ENCODE measurements at regions of chr5 and their contacts with region 1.

Region 1: DNA sequence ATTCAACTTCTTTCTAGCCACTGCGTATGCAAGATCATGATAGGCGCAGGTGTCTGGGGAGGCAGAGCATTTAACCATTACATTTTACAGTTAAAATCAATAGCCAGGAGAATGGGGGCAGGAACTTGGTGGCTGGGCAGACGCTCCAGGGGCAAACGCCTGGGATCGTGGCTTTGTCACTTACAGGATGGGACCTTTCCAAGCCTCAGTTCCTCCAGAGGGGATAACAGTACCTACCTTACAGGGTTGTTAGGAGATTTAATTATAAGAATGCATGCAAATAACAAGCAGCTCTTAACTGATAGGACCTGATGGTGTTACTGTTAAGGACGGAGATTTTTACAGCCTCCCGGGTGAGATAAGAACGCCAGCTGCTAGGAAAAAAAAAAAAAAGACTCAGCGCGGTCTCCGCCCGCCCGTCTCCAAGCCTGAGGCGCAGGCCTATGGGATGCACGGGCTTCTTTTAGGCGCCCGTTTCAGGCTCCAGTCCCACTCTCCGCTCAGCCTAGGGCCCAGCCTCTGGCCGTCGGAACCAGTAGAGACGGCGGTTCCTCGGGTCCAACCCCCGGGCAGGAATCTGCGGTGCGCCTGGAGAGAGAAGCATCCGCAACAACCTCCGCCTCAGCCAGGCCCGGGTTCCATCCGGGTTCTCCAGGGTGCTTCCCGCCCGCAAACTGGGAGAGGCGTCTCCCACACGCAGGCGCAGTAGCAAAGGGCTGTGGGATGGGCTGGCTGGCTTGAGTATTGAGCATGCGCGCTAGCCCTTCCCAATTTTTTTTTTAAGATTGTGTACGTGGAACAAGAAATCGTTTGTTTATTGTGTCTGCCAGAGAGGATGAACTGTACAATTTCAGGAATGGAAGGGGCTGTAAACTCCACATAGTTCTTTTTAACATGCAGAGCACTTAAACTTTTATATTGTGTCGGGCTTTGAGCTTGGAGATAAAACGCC is at the start of gene FAM200C:
- DNase-seq: peak; percentile 94 to 95
- H3K4me3 ChIP-seq: peak within 1 kb of the TSS; percentile 56
- H3K4me3 Mint-ChIP-seq: peak within 1 kb of the TSS; percentile 96
- H3K27ac Mint-ChIP-seq: peak within 1 kb of the TSS; percentile 96
- H3K4me1 ChIP-seq: no peaks in the 10 kb centered on the region; the same call in 1 of the 2 replicates
- H3K4me1 Mint-ChIP-seq: peaks cover 6% of the 10 kb centered on the region
- H3K27me3 ChIP-seq: no peaks in the 10 kb centered on the region
- H3K27me3 Mint-ChIP-seq: no peaks in the 10 kb centered on the region
- CTCF ChIP-seq: no peak
- total RNA-seq, gene FAM200C: 3.2 TPM in 2 replicates

Region 2: DNA sequence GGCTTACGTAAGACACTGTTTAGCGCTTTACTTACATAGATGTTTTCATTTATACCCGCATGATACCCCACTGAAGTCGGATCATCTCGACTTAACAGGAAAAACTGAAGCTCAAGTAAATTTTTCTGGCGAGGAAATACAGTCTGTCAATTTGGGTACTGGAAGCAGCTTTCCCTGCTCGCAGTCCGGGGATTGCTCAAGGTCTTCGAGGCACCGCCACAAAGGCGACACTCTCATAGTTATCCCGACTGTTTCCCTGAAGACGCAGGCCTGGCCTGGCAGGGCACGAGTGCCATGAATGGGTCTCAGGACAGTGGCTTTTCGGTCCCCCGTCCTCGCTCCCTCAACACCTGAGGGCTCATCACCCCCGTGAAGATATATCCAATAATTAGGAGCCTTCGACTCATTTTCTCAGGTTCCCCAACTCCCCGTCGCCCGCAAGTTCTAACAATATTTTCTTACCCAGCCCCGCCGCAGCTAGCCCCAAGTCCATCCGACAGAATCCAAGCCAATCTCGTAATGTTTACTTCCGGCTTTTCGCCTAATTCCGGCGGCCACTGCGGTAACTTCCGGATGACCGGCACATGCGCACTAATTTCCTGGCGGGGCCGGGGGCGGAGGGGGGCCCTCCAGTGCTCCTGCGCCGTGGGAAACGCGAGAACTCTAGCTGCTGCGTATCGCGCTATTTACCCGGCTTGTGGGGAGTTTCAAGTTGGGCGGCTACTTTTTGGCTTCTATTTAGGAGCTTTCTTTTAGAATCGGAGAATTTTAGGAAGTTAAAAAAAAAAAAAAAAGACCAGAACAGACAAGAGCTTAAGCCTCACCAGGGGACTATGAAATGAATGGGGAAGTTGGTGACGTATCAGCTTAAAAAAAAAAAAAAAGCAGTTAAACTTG is 19.1 kb after region 1 on chr5 and contains the start of gene SLU7:
- CTCF ChIA-PET with region 1: interaction called, 3 read pairs
- POLR2A ChIA-PET with region 1: interaction called, 21 read pairs
- intact Hi-C with region 1: loop called (anchors 1 kb)
- DNase-seq: peak; percentile 95 to 96
- H3K4me3 ChIP-seq: peak within 1 kb of the TSS; percentile 99
- H3K4me3 Mint-ChIP-seq: peak within 1 kb of the TSS; percentile 92
- H3K27ac Mint-ChIP-seq: peak within 1 kb of the TSS; percentile 95
- H3K4me1 ChIP-seq: peaks cover 13% of the 10 kb centered on the region; the same call in 1 of the 2 replicates
- H3K4me1 Mint-ChIP-seq: peaks cover 34% of the 10 kb centered on the region
- H3K27me3 ChIP-seq: no peaks in the 10 kb centered on the region
- H3K27me3 Mint-ChIP-seq: no peaks in the 10 kb centered on the region
- CTCF ChIP-seq: no peak
- total RNA-seq, gene SLU7: 53.1 and 55.0 TPM in 2 replicates

Region 3: DNA sequence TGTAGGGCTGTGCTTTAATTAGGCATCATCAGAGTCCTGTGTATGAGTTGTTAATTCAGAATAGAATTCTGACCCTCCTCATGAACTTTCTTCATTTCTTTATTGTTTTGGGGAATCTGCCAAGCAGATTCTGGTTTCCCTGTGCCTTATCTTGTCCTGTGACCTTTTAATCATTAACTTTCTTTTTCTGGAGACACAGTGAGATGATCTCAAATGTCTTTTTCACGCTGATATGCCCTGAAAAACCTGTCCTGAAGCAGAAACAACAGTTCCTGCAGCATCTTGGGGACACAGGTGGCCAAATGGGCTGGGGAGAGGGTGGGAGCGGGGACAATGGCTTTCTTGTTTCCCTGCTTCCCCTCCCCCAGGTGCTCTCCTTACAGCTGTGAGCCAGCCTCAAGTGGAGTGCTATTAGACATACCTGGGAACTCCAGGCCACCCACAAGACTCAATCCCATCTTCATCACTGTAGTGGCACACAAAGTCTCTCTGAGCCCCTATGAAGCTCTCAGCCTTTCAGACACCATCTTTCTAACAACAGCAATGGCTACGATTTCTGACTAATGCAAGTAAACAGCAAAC is 238.6 kb after region 1 on chr5:
- CTCF ChIA-PET with region 1: no interaction called
- POLR2A ChIA-PET with region 1: no interaction called
- intact Hi-C with region 1: no loop called
- DNase-seq: no peak
- H3K4me3 ChIP-seq: no peak overlapping the region
- H3K4me3 Mint-ChIP-seq: no peak overlapping the region
- H3K27ac Mint-ChIP-seq: no peak overlapping the region
- H3K4me1 ChIP-seq: peaks cover 12% of the 10 kb centered on the region; the same call in 1 of the 2 replicates
- H3K4me1 Mint-ChIP-seq: peaks cover 20% of the 10 kb centered on the region
- H3K27me3 ChIP-seq: no peaks in the 10 kb centered on the region; the same call in 1 of the 2 replicates
- H3K27me3 Mint-ChIP-seq: no peaks in the 10 kb centered on the region
- CTCF ChIP-seq: no peak

Measured in Caco-2 (cell line).